Activated CD8-positive, alpha-beta T cell treated with anti-CD3 and anti-CD28 coated beads for 36 hours (primary cell): ENCODE measurements at regions of chr2 and their contacts with region 1.

Region 1: DNA sequence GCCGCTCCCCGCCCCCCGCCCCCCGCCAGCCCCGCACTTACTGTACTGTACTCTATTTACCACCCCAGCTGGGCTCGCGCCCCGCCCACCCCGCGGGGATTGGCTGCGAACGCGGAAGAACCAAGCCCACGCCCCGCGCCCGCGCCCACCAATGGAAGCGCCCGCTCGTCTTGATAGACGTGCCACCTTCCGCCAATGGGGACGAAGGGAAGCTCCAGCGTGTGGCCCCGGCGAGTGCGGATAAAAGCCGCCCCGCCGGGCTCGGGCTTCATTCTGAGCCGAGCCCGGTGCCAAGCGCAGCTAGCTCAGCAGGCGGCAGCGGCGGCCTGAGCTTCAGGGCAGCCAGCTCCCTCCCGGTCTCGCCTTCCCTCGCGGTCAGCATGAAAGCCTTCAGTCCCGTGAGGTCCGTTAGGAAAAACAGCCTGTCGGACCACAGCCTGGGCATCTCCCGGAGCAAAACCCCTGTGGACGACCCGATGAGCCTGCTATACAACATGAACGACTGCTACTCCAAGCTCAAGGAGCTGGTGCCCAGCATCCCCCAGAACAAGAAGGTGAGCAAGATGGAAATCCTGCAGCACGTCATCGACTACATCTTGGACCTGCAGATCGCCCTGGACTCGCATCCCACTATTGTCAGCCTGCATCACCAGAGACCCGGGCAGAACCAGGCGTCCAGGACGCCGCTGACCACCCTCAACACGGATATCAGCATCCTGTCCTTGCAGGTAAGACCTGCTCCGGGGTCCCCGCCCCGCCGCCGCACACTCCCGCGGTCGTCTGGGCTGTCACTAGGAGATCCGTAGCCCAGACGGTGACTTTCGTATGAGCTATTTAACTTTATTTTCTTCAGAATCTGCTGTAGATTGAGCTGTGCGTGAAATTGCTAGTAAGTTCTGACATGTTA is at the start of gene ID2:
- DNase-seq: peak; percentile 99
- ATAC-seq: peak; percentile 76
- H3K4me3 Mint-ChIP-seq: peak within 1 kb of the TSS; percentile 95
- H3K27ac Mint-ChIP-seq: peak within 1 kb of the TSS; percentile 92
- H3K4me1 Mint-ChIP-seq: peaks cover 40% of the 10 kb centered on the region
- H3K27me3 Mint-ChIP-seq: peaks cover 10% of the 10 kb centered on the region
- CTCF ChIP-seq: no peak
- total RNA-seq, gene ID2: 85.7 to 91.6 TPM

Region 2: GRCh38 chr2:7097348-7097895 is 1584.6 kb before region 1 on chr2:
- CTCF ChIA-PET with region 1: interaction called, 3 read pairs
- POLR2A ChIA-PET with region 1: no interaction called
- intact Hi-C with region 1: loop called (anchors 10 kb)
- DNase-seq: peak; percentile 81
- ATAC-seq: peak; percentile 97
- H3K4me3 Mint-ChIP-seq: peak overlapping the region; percentile 59
- H3K27ac Mint-ChIP-seq: peak overlapping the region; percentile 62
- H3K4me1 Mint-ChIP-seq: peaks cover 7% of the 10 kb centered on the region
- H3K27me3 Mint-ChIP-seq: no peaks in the 10 kb centered on the region
- CTCF ChIP-seq: peak; percentile 93

Region 3: DNA sequence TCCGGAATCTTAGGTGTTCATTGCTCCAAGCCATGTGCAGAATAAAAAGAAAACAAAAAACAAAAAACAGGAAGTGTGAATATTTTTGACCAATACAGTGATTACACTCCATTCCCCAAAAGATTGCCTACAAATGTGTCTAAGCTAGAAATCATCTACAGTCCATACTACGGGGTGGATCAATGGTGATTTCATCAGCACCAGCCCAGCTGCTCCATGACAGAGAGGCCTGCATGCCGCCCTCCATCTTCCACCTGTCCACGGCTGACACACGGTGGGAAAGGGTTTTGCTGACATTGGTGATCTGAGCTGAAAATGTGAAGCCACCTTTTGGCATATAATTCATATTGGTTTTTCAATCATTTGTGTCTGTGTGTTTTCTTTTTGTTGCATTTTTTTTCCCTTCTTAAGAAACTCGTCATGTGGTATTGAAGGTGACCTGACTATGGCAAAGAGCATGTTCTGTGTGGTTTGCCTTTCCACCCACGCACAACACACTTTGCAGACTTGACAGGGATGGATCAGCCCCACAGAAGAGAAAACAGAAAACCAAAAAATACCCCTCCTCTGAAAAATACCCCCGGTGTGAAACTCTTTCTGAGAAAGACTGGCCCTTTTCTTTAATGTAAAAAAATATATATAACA is 1231.7 kb before region 1 on chr2:
- CTCF ChIA-PET with region 1: no interaction called
- POLR2A ChIA-PET with region 1: interaction called, 16 read pairs
- intact Hi-C with region 1: no loop called
- DNase-seq: peak; percentile 92
- ATAC-seq: peak; percentile 73
- H3K4me3 Mint-ChIP-seq: peak overlapping the region; percentile 48
- H3K27ac Mint-ChIP-seq: peak overlapping the region; percentile 97
- H3K4me1 Mint-ChIP-seq: peaks cover 77% of the 10 kb centered on the region
- H3K27me3 Mint-ChIP-seq: no peaks in the 10 kb centered on the region
- CTCF ChIP-seq: no peak

Region 4: DNA sequence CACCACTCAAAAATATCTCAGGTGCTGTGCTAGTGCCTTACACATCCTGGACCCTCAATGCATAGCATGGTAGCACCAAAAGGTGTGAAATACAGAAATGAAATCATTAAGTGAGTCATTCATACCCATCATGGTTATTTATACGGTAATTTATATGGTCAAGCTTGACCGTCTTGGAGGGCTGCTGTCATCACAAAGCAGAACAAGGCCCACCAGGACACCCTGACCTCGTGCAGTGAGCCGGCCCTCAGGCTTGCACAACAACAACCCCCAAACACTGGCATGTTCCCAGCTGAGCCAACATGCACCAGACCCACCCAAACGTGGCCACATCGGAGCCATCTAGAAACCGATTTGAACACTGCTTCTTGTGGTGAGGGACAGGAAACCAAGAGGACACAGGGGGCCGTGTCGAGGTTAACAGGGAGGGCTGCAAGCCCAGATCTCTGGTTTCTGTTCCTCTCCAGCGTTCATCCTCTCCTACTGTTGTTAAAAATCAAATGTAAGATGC is 378.7 kb before region 1 on chr2:
- CTCF ChIA-PET with region 1: no interaction called
- POLR2A ChIA-PET with region 1: interaction called, 4 read pairs
- intact Hi-C with region 1: loop called (anchors 10 kb)
- DNase-seq: peak; percentile 93
- ATAC-seq: peak; percentile 76
- H3K4me3 Mint-ChIP-seq: peak overlapping the region; percentile 31
- H3K27ac Mint-ChIP-seq: peak overlapping the region; percentile 87
- H3K4me1 Mint-ChIP-seq: peaks cover 67% of the 10 kb centered on the region
- H3K27me3 Mint-ChIP-seq: peaks cover 5% of the 10 kb centered on the region
- CTCF ChIP-seq: no peak

Region 5: DNA sequence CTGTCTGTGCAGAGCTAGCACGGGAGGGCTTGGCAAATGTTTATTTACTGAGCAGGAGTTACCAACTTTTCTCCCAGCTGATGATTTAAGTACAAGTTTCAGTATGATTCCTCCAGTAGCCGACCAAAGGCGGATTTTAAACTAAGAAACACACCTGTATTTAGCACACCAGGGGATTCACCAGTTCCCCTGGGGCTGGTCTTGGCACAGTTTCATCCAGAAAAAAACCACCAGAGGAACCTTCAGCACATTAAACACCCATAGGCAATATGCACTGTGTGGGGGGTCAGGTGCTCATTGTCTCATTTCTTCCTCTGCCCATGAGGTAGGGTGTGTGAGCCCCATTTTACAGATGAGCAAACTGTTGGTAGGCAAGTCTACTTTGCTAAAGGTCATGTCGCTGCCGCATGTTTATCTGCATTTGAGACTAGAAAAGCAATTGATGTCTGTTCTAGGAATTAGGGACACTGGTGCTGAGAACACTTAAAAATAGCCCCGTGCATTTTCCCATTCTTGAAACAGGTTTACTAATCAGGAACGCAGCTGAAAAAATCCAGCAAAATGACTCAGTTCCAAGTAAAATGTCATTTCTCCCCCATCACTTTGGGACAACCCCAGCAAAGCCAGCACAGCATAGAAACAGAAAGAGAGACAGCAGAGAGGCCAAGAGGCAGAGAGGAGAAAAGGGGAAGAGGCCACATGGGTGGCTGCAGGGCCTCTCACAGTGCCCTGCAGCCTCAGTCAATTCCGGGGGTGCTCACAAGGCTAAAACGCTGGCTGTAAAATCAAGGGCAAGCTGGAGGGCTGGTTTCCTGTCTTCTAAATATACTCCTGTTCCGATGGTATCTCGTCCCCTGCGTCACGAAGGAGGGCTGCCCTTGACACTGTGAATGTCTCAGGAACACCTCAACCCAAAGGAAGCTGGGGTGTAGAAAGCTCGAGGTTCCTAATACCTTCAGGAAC is 167.0 kb before region 1 on chr2:
- CTCF ChIA-PET with region 1: interaction called, 3 read pairs
- POLR2A ChIA-PET with region 1: interaction called, 12 read pairs
- intact Hi-C with region 1: loop called (anchors 10 kb)
- DNase-seq: peak; percentile 87
- ATAC-seq: peak; percentile 88
- H3K4me3 Mint-ChIP-seq: peak overlapping the region; percentile 38
- H3K27ac Mint-ChIP-seq: peak overlapping the region; percentile 96
- H3K4me1 Mint-ChIP-seq: peaks cover 65% of the 10 kb centered on the region
- H3K27me3 Mint-ChIP-seq: no peaks in the 10 kb centered on the region
- CTCF ChIP-seq: no peak

Region 6: DNA sequence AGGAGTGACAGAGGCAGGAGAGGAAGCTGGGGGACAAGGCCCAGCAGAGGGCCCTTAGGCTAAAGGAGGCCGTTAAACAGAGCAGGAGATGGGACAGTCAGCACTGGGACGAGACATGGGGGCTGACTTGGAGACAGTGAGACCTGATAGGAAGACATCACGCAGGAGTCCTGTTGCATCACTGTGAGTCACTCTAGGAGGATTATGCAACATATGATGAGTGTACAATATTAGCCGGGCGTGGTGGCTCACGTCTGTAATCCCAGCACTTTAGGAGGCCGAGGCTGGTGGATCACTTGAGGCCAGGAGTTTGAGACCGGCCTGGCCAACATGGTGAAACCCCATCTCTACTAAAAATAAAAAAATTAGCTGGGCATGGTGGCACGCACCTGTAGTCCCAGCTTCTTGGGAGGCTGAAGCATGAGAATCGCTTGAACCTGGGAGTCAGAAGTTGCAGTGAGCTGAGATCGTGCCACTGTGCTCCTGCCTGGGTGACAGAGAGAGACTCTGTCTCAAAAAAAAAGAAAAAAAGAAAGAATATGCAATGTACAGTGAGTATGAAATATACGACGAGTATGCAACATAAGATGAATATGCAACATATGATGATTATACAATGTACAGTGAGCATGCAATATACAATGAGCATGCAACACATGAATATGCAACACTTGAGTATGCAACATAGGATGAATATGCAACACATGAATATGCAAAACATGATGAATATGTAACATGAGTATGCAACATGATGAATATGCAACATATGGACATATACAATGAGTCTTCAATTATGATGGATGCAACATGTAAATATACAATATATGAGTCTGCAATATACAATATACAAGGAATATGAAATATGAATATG is 83.5 kb before region 1 on chr2:
- CTCF ChIA-PET with region 1: no interaction called
- POLR2A ChIA-PET with region 1: no interaction called
- intact Hi-C with region 1: no loop called
- DNase-seq: no peak
- ATAC-seq: no peak
- H3K4me3 Mint-ChIP-seq: no peak overlapping the region
- H3K27ac Mint-ChIP-seq: no peak overlapping the region
- H3K4me1 Mint-ChIP-seq: no peaks in the 10 kb centered on the region
- H3K27me3 Mint-ChIP-seq: no peaks in the 10 kb centered on the region
- CTCF ChIP-seq: no peak

Region 7: GRCh38 chr2:8671802-8672201 is 10.2 kb before region 1 on chr2:
- CTCF ChIA-PET with region 1: no interaction called
- POLR2A ChIA-PET with region 1: interaction called, 10 read pairs
- intact Hi-C with region 1: no loop called
- DNase-seq: peak; percentile 30
- ATAC-seq: peak; percentile 64
- H3K4me3 Mint-ChIP-seq: no peak overlapping the region
- H3K27ac Mint-ChIP-seq: no peak overlapping the region
- H3K4me1 Mint-ChIP-seq: peaks cover 2% of the 10 kb centered on the region
- H3K27me3 Mint-ChIP-seq: peaks cover 25% of the 10 kb centered on the region
- CTCF ChIP-seq: no peak